Lower leg skin (tissue), 4 donors: ENCODE measurements at regions of chr2 and their contacts with region 1.

Region 1: GRCh38 chr2:195579776-195580555 is 77.1 kb upstream of the SLC39A10 start:
- DNase-seq: no peak
- H3K4me3 ChIP-seq: no peak overlapping the region
- CTCF ChIP-seq: no peak
- POLR2A ChIP-seq: no peak

Region 2: DNA sequence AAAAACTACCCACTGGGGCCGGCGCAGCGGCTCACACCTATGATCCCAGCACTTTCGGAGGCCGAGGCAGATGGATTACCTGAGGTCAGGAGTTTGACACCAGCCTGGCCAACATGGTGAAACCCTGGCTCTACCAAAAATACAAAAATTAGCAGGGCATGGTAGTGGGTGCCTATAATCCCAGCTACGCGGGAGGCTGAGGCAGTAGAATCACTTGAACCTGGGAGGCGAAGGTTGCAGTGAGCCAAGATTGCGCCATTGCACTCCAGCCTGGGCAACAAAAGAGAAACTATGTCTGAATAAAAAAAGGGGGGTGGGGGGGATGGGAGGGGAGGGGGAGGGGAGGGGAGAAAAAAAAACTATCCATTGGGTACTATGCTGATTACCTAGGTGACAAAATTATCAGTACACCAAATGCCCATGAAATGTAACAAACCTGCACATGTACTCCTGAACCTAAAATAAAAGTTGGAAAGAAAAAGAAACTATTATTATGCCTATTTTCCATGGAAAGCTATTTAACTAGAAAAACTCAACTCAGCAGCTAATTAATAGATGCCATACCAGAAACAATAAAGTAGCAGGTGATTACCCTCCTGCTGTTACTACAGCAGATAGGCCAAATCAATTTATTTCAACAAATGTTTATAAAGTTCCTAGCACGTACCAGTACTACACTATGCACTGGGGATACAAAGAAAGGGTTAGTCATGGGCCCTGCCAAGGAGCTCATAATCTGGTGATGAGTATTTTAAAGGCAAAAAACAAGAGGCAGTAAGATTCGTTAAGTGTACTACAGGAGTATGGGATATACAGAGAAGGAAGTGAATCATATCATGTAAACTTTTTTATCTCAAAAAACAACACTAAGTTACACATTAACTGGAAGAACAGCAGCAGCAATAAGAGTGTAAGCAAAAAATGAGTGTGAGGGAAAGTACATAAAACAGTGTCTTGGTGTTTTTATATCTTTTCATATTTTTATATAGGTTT is 35.8 kb before region 1 on chr2:
- intact Hi-C with region 1: no loop called
- DNase-seq: no peak
- H3K4me3 ChIP-seq: no peak overlapping the region
- CTCF ChIP-seq: no peak
- POLR2A ChIP-seq: no peak

Region 3: DNA sequence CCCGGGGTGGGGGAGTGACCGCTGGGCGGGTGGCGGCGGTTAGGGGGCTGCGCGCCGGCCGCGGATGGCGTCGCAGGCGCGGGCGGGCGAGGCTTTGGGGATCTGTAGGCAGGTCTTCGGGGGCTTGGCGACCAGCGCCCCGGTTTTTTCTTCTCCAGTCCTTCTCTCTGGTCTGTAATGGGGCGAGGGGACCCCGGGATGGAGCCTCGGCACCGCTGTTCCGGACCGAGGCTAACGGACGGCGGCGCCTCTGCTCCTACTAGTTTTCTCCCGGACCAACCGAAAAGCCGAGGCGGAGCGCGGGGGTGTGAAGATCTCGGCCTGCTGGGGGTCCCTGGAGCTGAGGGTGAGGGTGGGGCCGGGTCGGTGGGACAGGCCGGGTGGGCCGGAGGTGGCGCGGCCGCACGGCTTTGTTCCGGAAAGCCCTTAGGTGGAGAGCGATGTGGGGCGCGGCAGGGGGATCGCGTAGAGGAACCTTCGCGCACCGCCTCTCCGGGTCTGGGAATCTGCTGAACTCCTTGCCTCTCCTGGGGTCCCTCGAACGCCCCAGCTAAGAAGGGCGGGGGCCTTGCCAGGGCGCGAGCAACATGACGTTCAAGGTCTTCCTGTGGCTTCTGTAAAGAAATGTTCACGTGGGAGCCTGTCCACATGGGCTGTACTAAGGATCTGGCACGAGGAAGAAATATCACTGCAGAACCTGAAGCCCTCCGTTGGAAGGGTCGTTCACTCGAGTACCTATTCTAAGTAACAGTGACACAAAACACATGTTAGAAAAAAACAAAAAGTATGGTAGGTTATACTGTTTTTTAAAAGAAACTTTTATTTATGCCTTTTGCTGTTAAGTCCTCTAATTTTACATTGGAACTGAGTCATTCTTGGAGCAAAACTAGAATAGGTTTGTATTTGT is 77.9 kb after region 1 on chr2:
- intact Hi-C with region 1: loop called (anchors 2 kb)
- DNase-seq: peak; percentile 75 to 91
- H3K4me3 ChIP-seq: peak overlapping the region; percentile 97
- CTCF ChIP-seq: no peak
- POLR2A ChIP-seq: no peak

Region 4: GRCh38 chr2:196182439-196183171 is 602.6 kb after region 1 on chr2:
- intact Hi-C with region 1: no loop called
- DNase-seq: no peak
- H3K4me3 ChIP-seq: no peak overlapping the region
- CTCF ChIP-seq: no peak
- POLR2A ChIP-seq: no peak